AG04449 (cell line): ENCODE measurements at regions of chr3 and their contacts with region 1.

Region 1: GRCh38 chr3:180912304-180913296 is at the start of gene FXR1:
- DNase-seq: no peak
- H3K4me3 ChIP-seq: peak within 1 kb of the TSS; percentile 90
- CTCF ChIP-seq: peak; percentile 81

Region 2: GRCh38 chr3:180855364-180855763 is 57.2 kb before region 1 on chr3:
- CTCF ChIA-PET with region 1: no interaction called
- POLR2A ChIA-PET with region 1: no interaction called
- DNase-seq: no peak
- H3K4me3 ChIP-seq: no peak overlapping the region
- CTCF ChIP-seq: no peak

Region 3: DNA sequence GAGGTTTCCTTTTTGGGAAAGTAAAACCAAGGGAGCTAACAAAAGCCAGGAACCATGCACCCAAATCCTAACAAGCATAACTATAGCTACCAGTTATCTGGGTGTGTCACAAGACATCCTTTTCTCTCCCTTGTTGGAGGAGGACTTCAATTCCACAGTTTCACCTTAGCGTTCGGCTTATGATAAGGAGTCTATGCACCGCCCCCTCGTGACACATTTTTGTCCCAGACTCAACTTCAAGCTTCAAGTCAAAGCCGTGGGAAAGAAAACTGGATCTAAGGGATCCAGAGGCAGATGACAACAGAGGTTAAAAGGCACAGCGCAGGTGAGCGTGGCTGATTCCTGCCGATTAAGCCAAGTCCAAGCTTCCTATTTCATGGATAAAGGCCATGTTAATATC is 14.0 kb before region 1 on chr3:
- CTCF ChIA-PET with region 1: interaction called, 18 read pairs
- POLR2A ChIA-PET with region 1: no interaction called
- DNase-seq: no peak
- H3K4me3 ChIP-seq: no peak overlapping the region
- CTCF ChIP-seq: no peak

Region 4: GRCh38 chr3:180923561-180923960 is 11.0 kb after region 1 on chr3:
- CTCF ChIA-PET with region 1: interaction called, 13 read pairs
- POLR2A ChIA-PET with region 1: no interaction called
- DNase-seq: no peak
- H3K4me3 ChIP-seq: no peak overlapping the region
- CTCF ChIP-seq: no peak